ENCODE measurements at regions of chr12 and their contacts with region 1.

Region 1: DNA sequence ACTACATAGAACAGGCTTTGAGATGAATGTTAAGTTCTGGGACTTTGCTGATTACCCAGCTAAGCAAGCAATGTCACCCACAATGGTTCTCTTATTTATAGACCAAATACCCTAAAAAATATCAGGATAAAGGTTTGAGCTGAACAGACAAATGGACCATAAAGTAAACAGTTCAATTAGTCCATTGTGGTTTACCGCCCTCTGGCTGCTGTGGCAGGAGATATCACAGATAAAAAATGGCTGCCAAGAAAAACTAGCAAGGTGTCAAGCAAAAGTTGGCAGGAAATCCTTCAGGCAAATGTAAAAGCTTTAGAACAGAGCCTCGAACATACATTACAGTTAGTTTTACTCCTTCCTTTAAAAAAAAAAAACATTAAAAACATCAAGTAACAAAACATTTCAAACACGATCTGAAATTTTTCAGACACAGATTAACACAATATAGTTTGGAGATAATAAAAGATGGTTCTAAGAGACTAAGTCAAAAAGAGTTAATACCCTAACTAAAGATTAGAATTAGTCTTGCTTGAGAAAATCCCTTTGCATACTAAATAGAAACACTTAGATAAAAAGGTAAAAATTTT is 41.3 kb downstream of the MED13L start:
- DNase-seq: no peak
- ATAC-seq: peak; percentile 65
- H3K4me3 Mint-ChIP-seq: no peak overlapping the region
- H3K27ac Mint-ChIP-seq: peak overlapping the region; percentile 67
- H3K4me1 Mint-ChIP-seq: peaks cover 44% of the 10 kb centered on the region
- H3K27me3 Mint-ChIP-seq: no peaks in the 10 kb centered on the region
- CTCF ChIP-seq: peak; percentile 40

Region 2: DNA sequence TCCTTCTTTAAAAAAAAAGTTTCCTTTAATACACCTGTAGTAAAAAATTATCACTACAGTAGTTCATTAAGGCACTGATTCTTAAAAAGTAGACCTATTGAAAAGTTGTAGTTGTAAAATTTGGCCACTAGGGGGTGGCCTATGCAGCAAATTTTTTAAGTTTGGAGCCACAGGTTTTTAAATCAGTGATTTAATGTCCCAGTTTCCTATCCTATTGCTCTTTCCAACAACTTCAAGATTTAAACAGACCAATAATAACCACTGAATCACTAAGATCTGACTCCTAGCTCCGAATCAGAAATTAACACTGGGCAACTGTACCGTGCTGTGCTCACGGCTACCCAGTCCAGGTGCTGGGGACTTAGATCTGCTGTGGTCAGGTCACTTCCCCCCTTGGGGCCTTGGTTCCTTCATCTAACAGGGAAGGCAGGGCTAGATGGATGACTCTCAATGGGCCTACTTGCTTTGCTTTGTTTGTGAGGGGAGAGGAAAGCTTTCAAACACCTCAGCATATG is 238.1 kb before region 1 on chr12:
- CTCF ChIA-PET with region 1: interaction called, 24 read pairs
- POLR2A ChIA-PET with region 1: no interaction called
- intact Hi-C with region 1: loop called (anchors 1 kb)
- DNase-seq: no peak
- ATAC-seq: peak; percentile 90
- H3K4me3 Mint-ChIP-seq: no peak overlapping the region
- H3K27ac Mint-ChIP-seq: peak overlapping the region; percentile 78
- H3K4me1 Mint-ChIP-seq: peaks cover 10% of the 10 kb centered on the region
- H3K27me3 Mint-ChIP-seq: no peaks in the 10 kb centered on the region
- CTCF ChIP-seq: peak; percentile 57

Region 3: GRCh38 chr12:116015525-116015924 is 220.7 kb before region 1 on chr12:
- CTCF ChIA-PET with region 1: interaction called, 17 read pairs
- POLR2A ChIA-PET with region 1: interaction called, 4 read pairs
- intact Hi-C with region 1: loop called (anchors 1 kb)
- DNase-seq: no peak
- ATAC-seq: peak; percentile 67
- H3K4me3 Mint-ChIP-seq: no peak overlapping the region
- H3K27ac Mint-ChIP-seq: no peak overlapping the region
- H3K4me1 Mint-ChIP-seq: no peaks in the 10 kb centered on the region
- H3K27me3 Mint-ChIP-seq: no peaks in the 10 kb centered on the region
- CTCF ChIP-seq: no peak

Region 4: DNA sequence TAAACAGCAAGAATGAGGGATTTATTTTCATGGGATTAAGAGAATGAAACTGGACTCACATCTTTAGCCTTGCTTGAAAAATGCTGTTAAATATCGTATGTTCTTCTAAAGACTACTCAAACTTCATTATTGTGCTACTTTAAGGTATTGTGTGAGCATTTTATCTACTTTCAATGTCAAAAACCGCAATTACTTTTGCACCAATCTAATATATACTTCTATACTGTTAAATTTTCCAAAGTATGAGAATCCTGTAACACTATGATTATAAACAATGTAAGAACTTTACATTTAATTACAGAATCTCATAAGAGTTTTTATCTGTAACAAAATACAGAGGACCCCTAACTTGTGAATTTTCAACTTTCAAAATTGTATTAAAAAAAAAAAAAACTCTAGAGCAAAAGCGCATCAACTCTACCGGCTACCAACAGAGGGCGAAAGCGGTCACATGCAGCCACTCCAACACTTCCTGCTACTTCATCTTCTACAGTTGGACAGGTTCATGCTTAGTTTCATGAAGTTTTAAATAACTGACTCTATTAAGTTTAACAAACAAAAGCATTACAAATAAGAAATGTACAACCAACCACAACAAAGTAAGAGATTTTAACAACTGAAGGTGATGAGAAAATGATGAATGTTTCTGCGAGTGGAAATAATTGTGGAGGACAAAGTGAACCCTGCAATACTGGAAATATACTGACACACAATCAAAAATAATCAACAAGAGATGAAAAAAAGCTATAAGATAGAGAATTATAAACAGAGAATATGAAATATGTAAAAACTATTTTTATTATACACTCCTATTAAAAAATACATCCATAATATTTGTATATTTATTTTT is 169.6 kb before region 1 on chr12:
- CTCF ChIA-PET with region 1: interaction called, 11 read pairs
- POLR2A ChIA-PET with region 1: no interaction called
- intact Hi-C with region 1: loop called (anchors 1 kb)
- DNase-seq: peak; percentile 34
- ATAC-seq: peak; percentile 71
- H3K4me3 Mint-ChIP-seq: no peak overlapping the region
- H3K27ac Mint-ChIP-seq: peak overlapping the region; percentile 60
- H3K4me1 Mint-ChIP-seq: peaks cover 44% of the 10 kb centered on the region
- H3K27me3 Mint-ChIP-seq: no peaks in the 10 kb centered on the region
- CTCF ChIP-seq: peak; percentile 96

Region 5: GRCh38 chr12:116142936-116143898 is 93.0 kb before region 1 on chr12:
- CTCF ChIA-PET with region 1: interaction called, 22 read pairs
- POLR2A ChIA-PET with region 1: no interaction called
- intact Hi-C with region 1: loop called (anchors 1 kb)
- DNase-seq: no peak
- ATAC-seq: peak; percentile 72
- H3K4me3 Mint-ChIP-seq: peak overlapping the region; percentile 50
- H3K27ac Mint-ChIP-seq: peak overlapping the region; percentile 21
- H3K4me1 Mint-ChIP-seq: peaks cover 55% of the 10 kb centered on the region
- H3K27me3 Mint-ChIP-seq: no peaks in the 10 kb centered on the region
- CTCF ChIP-seq: no peak

Region 6: DNA sequence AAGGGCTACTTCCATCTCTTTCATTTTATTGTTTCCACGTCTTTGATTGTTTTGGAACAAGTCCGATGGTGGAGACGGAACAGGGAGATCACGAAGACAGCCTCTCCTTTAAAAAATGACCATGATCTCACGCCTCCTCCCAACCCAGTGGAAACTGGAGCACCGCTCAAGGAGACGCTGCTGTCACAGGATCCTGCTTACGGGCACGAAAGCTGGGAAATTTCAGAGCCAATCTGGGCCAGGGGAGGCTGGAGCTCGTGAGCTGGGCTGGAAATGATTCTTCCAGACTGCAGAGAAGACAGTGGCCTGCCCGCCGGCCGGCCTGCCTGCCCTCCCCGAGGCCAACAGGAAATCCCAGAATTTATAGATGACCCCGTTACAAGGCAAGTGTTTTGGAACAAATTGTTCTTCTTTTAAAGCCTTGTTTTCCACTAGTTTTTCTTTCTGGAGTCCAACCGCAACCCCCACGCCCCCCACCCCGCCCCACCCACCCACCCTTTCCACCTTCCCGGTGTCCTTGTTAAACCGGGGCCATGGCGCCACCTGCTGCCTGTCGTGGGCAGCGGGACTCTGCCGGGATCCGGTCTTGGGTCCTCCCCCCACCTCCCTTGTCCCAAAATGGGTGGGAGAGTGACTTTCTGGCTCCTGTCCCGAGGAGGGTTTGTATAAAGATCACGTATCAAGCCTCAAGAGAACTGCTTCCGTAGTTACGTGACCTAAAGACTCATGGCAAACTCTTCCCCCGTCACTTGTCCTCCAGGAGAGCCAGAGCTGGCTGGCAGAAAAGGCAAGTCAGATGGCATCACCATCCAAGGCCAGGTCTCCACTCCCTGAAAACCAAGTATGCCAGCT is 363.3 kb after region 1 on chr12:
- CTCF ChIA-PET with region 1: interaction called, 20 read pairs
- POLR2A ChIA-PET with region 1: no interaction called
- intact Hi-C with region 1: loop called (anchors 1 kb)
- DNase-seq: peak; percentile 62
- ATAC-seq: peak; percentile 86
- H3K4me3 Mint-ChIP-seq: peak overlapping the region; percentile 45
- H3K27ac Mint-ChIP-seq: peak overlapping the region; percentile 18
- H3K4me1 Mint-ChIP-seq: peaks cover 28% of the 10 kb centered on the region
- H3K27me3 Mint-ChIP-seq: no peaks in the 10 kb centered on the region
- CTCF ChIP-seq: peak; percentile 35

Region 7: GRCh38 chr12:116943419-116944372 is 707.5 kb after region 1 on chr12:
- CTCF ChIA-PET with region 1: no interaction called
- POLR2A ChIA-PET with region 1: no interaction called
- intact Hi-C with region 1: no loop called
- DNase-seq: no peak
- ATAC-seq: no peak
- H3K4me3 Mint-ChIP-seq: no peak overlapping the region
- H3K27ac Mint-ChIP-seq: no peak overlapping the region
- H3K4me1 Mint-ChIP-seq: peaks cover 3% of the 10 kb centered on the region
- H3K27me3 Mint-ChIP-seq: no peaks in the 10 kb centered on the region
- CTCF ChIP-seq: no peak

Measured in activated B cell treated with CpG ODN at 0.5 μM for 24 hours (primary cell).